ENCODE measurements at regions of chr11 and their contacts with region 1.

Region 1: GRCh38 chr11:119381181-119381988 is at the start of gene USP2:
- DNase-seq: peak; percentile 94 to 98 (median 97)
- ATAC-seq: peak; percentile 99
- H3K4me3 ChIP-seq: peak within 1 kb of the TSS; percentile 81
- H3K4me3 Mint-ChIP-seq: no peak within 1 kb of the TSS
- H3K27ac ChIP-seq: peak within 1 kb of the TSS; percentile 71
- H3K27ac Mint-ChIP-seq: peak within 1 kb of the TSS in 1 of 9 donors; percentile 87
- H3K4me1 ChIP-seq: peaks cover 9 to 14% of the 10 kb centered on the region in 2 donors
- H3K4me1 Mint-ChIP-seq: peaks cover 0 to 13% (median 5%) of the 10 kb centered on the region in 7 donors
- H3K27me3 ChIP-seq: no peaks in the 10 kb centered on the region
- H3K27me3 Mint-ChIP-seq: peaks cover 0 to 9% (median 0%) of the 10 kb centered on the region in 5 donors
- total RNA-seq, gene USP2: 0.07 to 1.1 (median 0.43) TPM

Region 2: GRCh38 chr11:119334174-119334930 is 47.0 kb before region 1 on chr11 and contains the start of gene RNF26:
- CTCF ChIA-PET with region 1: no interaction called
- POLR2A ChIA-PET with region 1: no interaction called
- intact Hi-C with region 1: loop called (anchors 1 kb)
- DNase-seq: peak; percentile 82 to 96 (median 94)
- ATAC-seq: peak; percentile 98
- H3K4me3 ChIP-seq: peak within 1 kb of the TSS; percentile 60
- H3K4me3 Mint-ChIP-seq: peak within 1 kb of the TSS; percentile 88 to 99 (median 98)
- H3K27ac ChIP-seq: peak within 1 kb of the TSS; percentile 89
- H3K27ac Mint-ChIP-seq: peak within 1 kb of the TSS; percentile 91 to 99 (median 97)
- H3K4me1 ChIP-seq: peaks cover 10 to 12% of the 10 kb centered on the region in 2 donors
- H3K4me1 Mint-ChIP-seq: peaks cover 22 to 59% (median 41%) of the 10 kb centered on the region in 7 donors
- H3K27me3 ChIP-seq: peaks cover 4 to 9% of the 10 kb centered on the region in 2 donors
- H3K27me3 Mint-ChIP-seq: peaks cover 9 to 30% (median 19%) of the 10 kb centered on the region in 5 donors
- total RNA-seq, gene RNF26: 16.9 to 28.3 (median 18.9) TPM

Region 3: DNA sequence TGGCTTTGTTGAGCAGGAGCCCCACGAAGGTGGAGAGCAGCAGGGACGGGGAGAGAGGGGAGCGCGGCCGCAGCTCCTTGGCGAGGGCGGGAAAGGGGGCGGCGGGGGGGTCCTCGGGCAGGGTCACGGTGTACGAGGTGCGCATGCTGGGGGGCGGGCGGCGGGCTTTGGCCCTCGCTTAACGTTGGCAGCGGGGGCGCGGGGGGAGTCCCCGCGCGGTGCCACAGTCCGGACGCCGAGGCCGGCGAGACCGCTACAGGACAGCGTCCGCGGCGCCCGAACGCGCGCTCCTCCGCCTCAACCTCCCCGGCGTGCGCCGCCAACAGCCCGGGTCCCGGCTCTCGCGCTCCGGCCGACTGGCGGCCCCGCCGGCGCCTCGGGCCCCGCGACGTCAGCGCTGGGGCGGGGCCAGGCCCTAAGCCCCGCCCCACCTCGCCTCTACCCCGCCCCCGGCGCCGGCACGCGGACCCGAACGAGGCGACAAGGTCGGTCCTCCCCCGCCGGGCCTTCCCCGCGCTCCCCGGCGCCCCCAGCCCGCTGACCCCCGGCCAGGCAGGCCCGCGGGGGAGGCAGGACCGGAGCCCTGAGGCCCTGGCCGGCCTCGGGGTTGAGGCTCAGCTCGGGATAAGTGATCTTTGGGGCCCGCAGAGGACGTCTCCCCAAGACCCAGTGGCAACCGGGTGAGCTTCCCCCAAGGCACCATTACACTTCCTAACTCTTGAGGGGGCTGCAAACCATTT is 17.4 kb before region 1 on chr11:
- CTCF ChIA-PET with region 1: interaction called, 5 read pairs
- POLR2A ChIA-PET with region 1: no interaction called
- intact Hi-C with region 1: loop called in 1 of 2 experiments (anchors 1 kb)
- DNase-seq: peak in 8 of 9 donors; percentile 31 to 80 (median 47)
- ATAC-seq: peak; percentile 91
- H3K4me3 ChIP-seq: no peak overlapping the region
- H3K4me3 Mint-ChIP-seq: peak overlapping the region; percentile 80 to 91 (median 82)
- H3K27ac ChIP-seq: no peak overlapping the region
- H3K27ac Mint-ChIP-seq: peak overlapping the region in 1 of 9 donors; percentile 17
- H3K4me1 ChIP-seq: no peaks in the 10 kb centered on the region
- H3K4me1 Mint-ChIP-seq: peaks cover 5 to 16% (median 11%) of the 10 kb centered on the region in 7 donors
- H3K27me3 ChIP-seq: peaks cover 5 to 22% of the 10 kb centered on the region in 2 donors
- H3K27me3 Mint-ChIP-seq: peaks cover 36 to 60% (median 46%) of the 10 kb centered on the region in 5 donors

Region 4: GRCh38 chr11:119421941-119422808 is 40.8 kb after region 1 on chr11:
- CTCF ChIA-PET with region 1: no interaction called
- POLR2A ChIA-PET with region 1: no interaction called
- intact Hi-C with region 1: no loop called
- DNase-seq: no peak
- ATAC-seq: no peak
- H3K4me3 ChIP-seq: no peak overlapping the region
- H3K4me3 Mint-ChIP-seq: peak overlapping the region; percentile 12 to 82 (median 60)
- H3K27ac ChIP-seq: no peak overlapping the region
- H3K27ac Mint-ChIP-seq: no peak overlapping the region
- H3K4me1 ChIP-seq: no peaks in the 10 kb centered on the region
- H3K4me1 Mint-ChIP-seq: peaks cover 4 to 19% (median 14%) of the 10 kb centered on the region in 7 donors
- H3K27me3 ChIP-seq: no peaks in the 10 kb centered on the region
- H3K27me3 Mint-ChIP-seq: peaks cover 43 to 54% (median 48%) of the 10 kb centered on the region in 5 donors

Region 5: DNA sequence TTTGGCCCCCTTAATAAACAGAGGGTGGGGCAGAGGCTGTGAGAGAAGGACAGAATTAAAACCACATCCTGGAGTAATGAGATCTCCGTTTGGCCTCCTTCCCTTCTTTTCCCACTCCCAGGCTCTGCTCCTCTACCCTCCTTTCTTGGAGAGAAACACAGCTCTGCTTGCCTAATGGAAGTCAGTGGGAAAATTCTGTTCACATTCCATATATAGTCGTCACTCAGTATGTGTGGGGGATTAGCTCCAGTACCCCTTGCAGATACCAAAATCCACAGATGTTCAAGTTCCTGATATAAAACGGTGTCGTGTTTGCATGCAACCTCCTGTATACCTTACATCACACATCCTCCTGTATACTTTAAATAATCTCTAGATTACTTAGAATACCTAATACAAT is 79.2 kb after region 1 on chr11:
- CTCF ChIA-PET with region 1: no interaction called
- POLR2A ChIA-PET with region 1: no interaction called
- intact Hi-C with region 1: no loop called
- DNase-seq: no peak
- ATAC-seq: no peak
- H3K4me3 ChIP-seq: no peak overlapping the region
- H3K4me3 Mint-ChIP-seq: no peak overlapping the region
- H3K27ac ChIP-seq: no peak overlapping the region
- H3K27ac Mint-ChIP-seq: no peak overlapping the region
- H3K4me1 ChIP-seq: no peaks in the 10 kb centered on the region
- H3K4me1 Mint-ChIP-seq: no peaks in the 10 kb centered on the region
- H3K27me3 ChIP-seq: no peaks in the 10 kb centered on the region
- H3K27me3 Mint-ChIP-seq: peaks cover 15 to 40% (median 29%) of the 10 kb centered on the region in 5 donors

Region 6: DNA sequence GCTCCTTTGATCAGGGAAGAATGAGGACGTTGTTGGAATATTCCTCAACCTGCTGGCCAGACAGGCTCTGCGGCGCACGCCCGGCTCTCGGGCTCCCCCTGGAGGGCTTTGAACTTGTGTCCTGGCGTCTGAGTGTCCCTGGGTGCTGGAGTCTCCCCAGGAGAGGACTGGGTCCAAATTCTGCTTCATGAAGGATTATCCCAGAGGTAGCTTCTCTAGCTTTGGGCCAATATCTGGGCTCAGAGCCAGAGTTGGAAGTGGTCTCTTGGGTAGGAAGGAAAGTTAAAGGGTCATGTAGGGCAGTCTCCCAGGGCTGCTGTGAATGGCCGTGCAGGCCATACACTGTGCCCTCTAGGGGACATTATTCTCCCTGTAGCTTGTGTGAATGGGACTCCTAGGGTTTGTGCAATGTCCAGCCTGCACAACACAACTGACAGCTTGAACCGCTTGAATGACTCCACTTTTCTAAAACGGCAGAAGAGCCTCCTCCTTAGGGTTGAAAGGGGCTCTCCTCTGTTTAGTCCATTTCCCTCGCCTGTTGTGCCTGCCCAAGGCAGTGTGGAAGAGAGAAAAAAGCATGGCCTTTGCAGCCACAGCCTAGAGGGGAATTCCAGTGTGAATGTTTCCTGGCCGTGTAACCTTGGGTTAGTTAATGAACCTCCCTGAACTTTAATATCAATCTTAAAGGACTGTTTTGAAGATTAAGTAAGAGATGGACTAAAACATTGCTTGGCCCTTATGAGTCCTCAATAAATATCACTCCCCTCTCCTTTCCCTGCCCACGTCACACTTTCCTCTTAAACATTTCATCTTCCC is 152.7 kb after region 1 on chr11:
- CTCF ChIA-PET with region 1: no interaction called
- POLR2A ChIA-PET with region 1: no interaction called
- intact Hi-C with region 1: no loop called
- DNase-seq: peak in 7 of 9 donors; percentile 13 to 68 (median 19)
- ATAC-seq: peak; percentile 84
- H3K4me3 ChIP-seq: no peak overlapping the region
- H3K4me3 Mint-ChIP-seq: no peak overlapping the region
- H3K27ac ChIP-seq: no peak overlapping the region
- H3K27ac Mint-ChIP-seq: no peak overlapping the region
- H3K4me1 ChIP-seq: no peaks in the 10 kb centered on the region
- H3K4me1 Mint-ChIP-seq: peaks cover 0 to 9% (median 0%) of the 10 kb centered on the region in 7 donors
- H3K27me3 ChIP-seq: no peaks in the 10 kb centered on the region
- H3K27me3 Mint-ChIP-seq: peaks cover 8 to 22% (median 16%) of the 10 kb centered on the region in 5 donors

Region 7: GRCh38 chr11:120096369-120097191 is 715.2 kb after region 1 on chr11:
- CTCF ChIA-PET with region 1: no interaction called
- POLR2A ChIA-PET with region 1: no interaction called
- intact Hi-C with region 1: no loop called
- DNase-seq: no peak
- ATAC-seq: no peak
- H3K4me3 ChIP-seq: no peak overlapping the region
- H3K4me3 Mint-ChIP-seq: no peak overlapping the region
- H3K27ac ChIP-seq: no peak overlapping the region
- H3K27ac Mint-ChIP-seq: no peak overlapping the region
- H3K4me1 ChIP-seq: no peaks in the 10 kb centered on the region
- H3K4me1 Mint-ChIP-seq: no peaks in the 10 kb centered on the region
- H3K27me3 ChIP-seq: no peaks in the 10 kb centered on the region
- H3K27me3 Mint-ChIP-seq: peaks cover 0 to 29% (median 6%) of the 10 kb centered on the region in 5 donors

Measured in naive thymus-derived CD4-positive, alpha-beta T cell (primary cell).